CD8-positive, alpha-beta T cell (primary cell): ENCODE measurements at regions of chr19 and their contacts with region 1.

Region 1: GRCh38 chr19:51393959-51394836 is 3.8 kb upstream of the C19orf84 start:
- DNase-seq: peak; percentile 69 to 97 (median 85)
- ATAC-seq: peak; percentile 88
- H3K4me3 ChIP-seq: peak overlapping the region; percentile 45 to 51
- H3K4me3 Mint-ChIP-seq: peak overlapping the region; percentile 84
- H3K27ac ChIP-seq: peak overlapping the region; percentile 31 to 74
- H3K27ac Mint-ChIP-seq: peak overlapping the region; percentile 84
- H3K4me1 ChIP-seq: peaks cover 22% of the 10 kb centered on the region
- H3K4me1 Mint-ChIP-seq: peaks cover 30% of the 10 kb centered on the region
- H3K27me3 ChIP-seq: no peaks in the 10 kb centered on the region
- H3K27me3 Mint-ChIP-seq: no peaks in the 10 kb centered on the region
- CTCF ChIP-seq: no peak

Region 2: DNA sequence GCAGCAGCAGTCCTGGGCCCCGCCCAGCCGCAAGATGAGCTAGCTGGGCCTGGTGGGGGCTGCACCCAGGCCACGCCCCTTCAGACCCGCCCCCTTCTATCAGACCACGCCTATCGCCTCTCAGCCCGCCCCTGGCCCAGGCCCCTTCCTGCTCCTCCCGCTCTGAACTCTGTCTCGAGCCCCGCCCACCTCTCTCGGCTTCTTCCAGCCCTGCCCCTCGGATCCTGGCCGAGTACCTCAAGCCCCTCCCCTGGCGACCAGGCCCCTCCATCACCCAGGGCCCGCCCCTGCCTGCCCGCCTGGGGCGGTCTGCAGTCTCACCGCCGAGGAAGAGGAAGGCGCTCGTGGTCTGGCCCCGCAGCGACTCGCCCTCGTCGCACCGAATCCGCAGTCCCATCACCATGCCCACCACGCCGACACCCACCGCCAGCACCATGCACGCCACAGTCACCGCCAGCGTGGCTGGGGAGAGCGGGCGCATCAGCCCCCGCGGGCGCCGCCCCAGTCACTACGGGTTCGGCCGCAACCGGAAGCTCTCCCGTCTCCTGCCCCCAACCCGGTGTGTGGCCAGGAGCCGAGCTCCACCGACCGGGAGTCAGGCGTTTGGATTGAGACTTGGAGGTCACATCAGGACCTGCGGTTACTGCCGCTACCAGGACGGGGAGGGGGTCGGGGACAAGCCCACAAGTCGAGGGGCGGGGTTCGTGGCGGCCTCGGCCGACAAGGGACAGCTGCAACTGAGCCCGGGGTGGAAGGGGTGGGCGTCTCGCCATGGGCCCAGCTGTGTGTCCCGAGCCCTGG is 26.4 kb before region 1 on chr19:
- CTCF ChIA-PET with region 1: interaction called, 8 read pairs
- POLR2A ChIA-PET with region 1: interaction called, 8 read pairs
- intact Hi-C with region 1: loop called (anchors 1 kb)
- DNase-seq: peak; percentile 88 to 98 (median 95)
- ATAC-seq: peak; percentile 78
- H3K4me3 ChIP-seq: peak overlapping the region; percentile 74 to 77
- H3K4me3 Mint-ChIP-seq: peak overlapping the region; percentile 98
- H3K27ac ChIP-seq: peak overlapping the region; percentile 48 to 87
- H3K27ac Mint-ChIP-seq: peak overlapping the region; percentile 96
- H3K4me1 ChIP-seq: peaks cover 61% of the 10 kb centered on the region
- H3K4me1 Mint-ChIP-seq: peaks cover 72% of the 10 kb centered on the region
- H3K27me3 ChIP-seq: no peaks in the 10 kb centered on the region
- H3K27me3 Mint-ChIP-seq: no peaks in the 10 kb centered on the region
- CTCF ChIP-seq: no peak

Region 3: GRCh38 chr19:51372649-51373504 is 21.3 kb before region 1 on chr19 and contains the start of gene NKG7:
- CTCF ChIA-PET with region 1: interaction called, 8 read pairs
- POLR2A ChIA-PET with region 1: interaction called, 8 read pairs
- intact Hi-C with region 1: loop called in 1 of 2 experiments (anchors 1 kb)
- DNase-seq: peak; percentile 39 to 95 (median 79)
- ATAC-seq: peak; percentile 78
- H3K4me3 ChIP-seq: peak within 1 kb of the TSS; percentile 54 to 77
- H3K4me3 Mint-ChIP-seq: peak within 1 kb of the TSS; percentile 98
- H3K27ac ChIP-seq: peak within 1 kb of the TSS; percentile 67 to 78
- H3K27ac Mint-ChIP-seq: peak within 1 kb of the TSS; percentile 96
- H3K4me1 ChIP-seq: peaks cover 69% of the 10 kb centered on the region
- H3K4me1 Mint-ChIP-seq: peaks cover 72% of the 10 kb centered on the region
- H3K27me3 ChIP-seq: no peaks in the 10 kb centered on the region
- H3K27me3 Mint-ChIP-seq: no peaks in the 10 kb centered on the region
- CTCF ChIP-seq: no peak
- total RNA-seq, gene NKG7: 159 to 169 TPM

Region 4: GRCh38 chr19:51441410-51442390 is 47.5 kb after region 1 on chr19:
- CTCF ChIA-PET with region 1: interaction called, 11 read pairs
- POLR2A ChIA-PET with region 1: interaction called, 4 read pairs
- intact Hi-C with region 1: loop called (anchors 2 kb)
- DNase-seq: peak; percentile 56 to 95 (median 81)
- ATAC-seq: peak; percentile 91
- H3K4me3 ChIP-seq: peak overlapping the region; percentile 21 to 32
- H3K4me3 Mint-ChIP-seq: peak overlapping the region; percentile 75
- H3K27ac ChIP-seq: peak overlapping the region; percentile 24 to 83
- H3K27ac Mint-ChIP-seq: peak overlapping the region; percentile 93
- H3K4me1 ChIP-seq: peaks cover 31% of the 10 kb centered on the region
- H3K4me1 Mint-ChIP-seq: peaks cover 43% of the 10 kb centered on the region
- H3K27me3 ChIP-seq: peaks cover 0 to 2% of the 10 kb centered on the region in 2 experiments
- H3K27me3 Mint-ChIP-seq: peaks cover 7% of the 10 kb centered on the region
- CTCF ChIP-seq: peak; percentile 27

Region 5: DNA sequence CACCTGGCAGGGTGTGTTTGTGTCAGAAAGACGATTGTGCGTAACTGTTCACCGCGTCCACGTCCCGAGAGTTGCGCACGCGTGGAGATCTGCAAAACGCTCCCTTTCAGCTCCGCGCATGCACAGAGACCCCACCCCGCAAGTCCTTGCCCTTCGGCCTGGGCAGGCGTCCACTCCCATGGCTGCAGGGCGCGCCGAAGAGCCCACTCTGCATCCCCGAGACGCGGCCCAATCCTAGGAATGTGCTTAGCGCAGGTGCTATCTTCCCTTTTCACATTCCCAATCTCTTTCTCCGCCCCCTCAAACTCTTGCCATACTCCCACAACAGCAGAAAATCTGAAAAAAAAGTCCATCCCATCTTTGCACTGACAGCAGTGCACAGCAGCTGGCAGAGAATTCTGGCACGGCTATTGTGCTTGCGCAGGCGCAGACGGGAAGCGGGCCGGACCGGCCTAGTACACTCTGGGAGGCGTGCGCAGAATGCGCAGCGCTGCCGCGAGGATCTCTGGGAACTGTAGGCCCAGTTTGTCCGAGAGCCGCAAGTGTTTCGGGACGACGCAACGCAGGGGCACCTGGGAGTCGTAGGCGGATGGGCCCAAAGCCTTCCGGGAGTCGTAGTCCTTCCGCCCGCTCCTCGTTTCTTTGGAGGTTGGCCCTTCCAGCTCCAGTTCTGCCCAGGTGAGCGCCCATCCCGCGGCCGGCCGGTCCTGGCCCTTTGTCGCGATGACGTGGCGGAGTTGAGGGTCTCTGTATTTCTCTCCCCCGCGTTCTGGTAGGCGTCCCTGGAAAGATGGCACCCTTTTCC is 200.0 kb after region 1 on chr19:
- CTCF ChIA-PET with region 1: no interaction called
- POLR2A ChIA-PET with region 1: no interaction called
- intact Hi-C with region 1: loop called in 1 of 2 experiments (anchors 10 kb)
- DNase-seq: peak; percentile 86 to 97 (median 96)
- ATAC-seq: peak; percentile 100
- H3K4me3 ChIP-seq: peak overlapping the region; percentile 69 to 98
- H3K4me3 Mint-ChIP-seq: peak overlapping the region; percentile 99
- H3K27ac ChIP-seq: peak overlapping the region; percentile 50 to 73
- H3K27ac Mint-ChIP-seq: peak overlapping the region; percentile 87
- H3K4me1 ChIP-seq: peaks cover 18% of the 10 kb centered on the region
- H3K4me1 Mint-ChIP-seq: peaks cover 27% of the 10 kb centered on the region
- H3K27me3 ChIP-seq: no peaks in the 10 kb centered on the region
- H3K27me3 Mint-ChIP-seq: peaks cover 10% of the 10 kb centered on the region
- CTCF ChIP-seq: no peak